CD8-positive, alpha-beta T cell (primary cell): ENCODE measurements at regions of chr19 and their contacts with region 1.

Region 1: DNA sequence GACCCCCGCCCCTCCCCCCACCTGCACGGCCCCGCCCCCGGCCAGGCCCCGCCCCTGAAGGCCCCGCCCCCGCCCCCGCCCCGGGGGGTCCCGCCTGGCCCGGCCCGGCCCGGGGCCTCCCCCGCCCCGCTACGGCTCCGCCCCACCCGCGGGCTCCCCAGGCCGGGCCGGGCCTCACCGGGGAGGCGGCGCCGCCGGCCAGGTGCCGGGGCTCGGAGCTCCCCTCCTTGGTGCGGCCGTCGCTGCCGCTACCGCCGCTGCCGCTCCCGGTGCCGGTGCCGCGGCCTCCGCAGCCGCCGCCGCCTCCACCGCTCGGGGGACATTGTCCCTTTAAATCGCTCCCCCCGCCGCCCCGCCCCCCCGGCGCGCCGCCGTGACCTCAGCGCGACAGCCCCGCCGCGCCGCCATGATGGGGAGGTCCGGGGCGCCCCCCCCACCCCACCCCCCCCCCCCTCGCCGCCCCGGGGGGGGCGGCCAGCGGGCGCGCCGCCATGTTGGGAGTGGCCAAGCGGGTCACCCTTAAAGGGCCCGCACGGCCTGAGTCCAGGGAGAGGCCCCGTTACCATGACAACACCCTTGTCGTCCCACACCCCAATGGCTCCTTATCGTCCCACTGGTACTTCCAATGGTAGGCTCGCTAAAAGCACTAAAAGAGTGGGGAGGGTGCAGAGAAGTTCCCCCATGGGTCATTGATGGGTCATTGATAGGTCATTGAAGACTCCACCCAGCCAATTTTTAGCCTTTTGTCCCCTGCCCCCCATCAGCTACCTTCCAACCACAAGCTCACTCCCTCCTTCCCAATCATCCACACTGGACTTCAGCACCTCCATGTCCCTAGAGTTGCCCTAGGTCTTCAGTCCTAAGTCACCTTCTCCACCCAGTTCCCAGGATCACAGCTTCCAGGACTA is at the start of gene WIZ:
- DNase-seq: peak; percentile 75 to 91 (median 86)
- ATAC-seq: peak; percentile 88
- H3K4me3 ChIP-seq: peak within 1 kb of the TSS; percentile 37 to 65
- H3K4me3 Mint-ChIP-seq: peak within 1 kb of the TSS; percentile 84
- H3K27ac ChIP-seq: peak within 1 kb of the TSS; percentile 40 to 83
- H3K27ac Mint-ChIP-seq: peak within 1 kb of the TSS; percentile 93
- H3K4me1 ChIP-seq: peaks cover 21% of the 10 kb centered on the region
- H3K4me1 Mint-ChIP-seq: peaks cover 33% of the 10 kb centered on the region
- H3K27me3 ChIP-seq: no peaks in the 10 kb centered on the region
- H3K27me3 Mint-ChIP-seq: no peaks in the 10 kb centered on the region
- CTCF ChIP-seq: no peak
- total RNA-seq, gene WIZ: 16.4 to 20.1 TPM

Region 2: DNA sequence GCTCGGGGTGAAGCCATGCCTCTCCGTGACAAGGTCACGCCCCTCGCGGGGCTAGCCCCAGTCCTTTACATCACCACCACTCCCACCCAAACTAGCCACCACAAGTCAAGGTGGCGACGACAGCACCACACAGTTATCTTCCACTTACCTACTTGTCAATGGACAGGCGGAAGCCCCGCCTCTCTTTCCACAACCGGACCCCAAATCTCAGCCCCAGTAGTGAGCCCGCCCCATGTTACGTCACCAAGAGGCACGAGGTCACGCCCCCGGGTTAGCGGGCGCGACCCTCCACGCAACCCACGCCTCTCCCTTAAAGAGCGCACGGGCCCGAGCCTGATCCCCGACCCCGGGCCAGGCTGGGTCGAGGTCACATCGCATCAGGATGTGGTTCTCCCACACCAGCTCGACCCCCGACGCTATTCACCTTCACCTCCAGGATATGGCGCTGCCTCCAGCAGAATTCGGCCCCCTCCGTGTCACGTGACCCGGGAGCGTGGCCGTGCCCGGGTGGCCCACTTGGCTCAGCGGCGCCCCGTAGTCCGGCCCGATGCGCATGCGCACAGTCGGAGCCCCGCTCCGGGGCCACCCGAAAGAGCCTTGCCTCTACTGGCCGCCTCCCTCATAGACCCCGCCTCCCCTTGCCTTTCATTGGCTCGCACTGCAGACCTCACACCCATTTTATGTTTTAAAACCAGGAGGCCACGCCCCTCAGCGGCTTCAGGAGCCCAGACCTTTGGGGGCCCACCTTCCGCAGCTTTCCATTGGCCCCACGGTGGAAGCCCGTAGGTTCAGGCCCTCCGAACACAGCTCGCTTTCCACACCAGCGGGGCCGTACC is 324.4 kb before region 1 on chr19:
- CTCF ChIA-PET with region 1: no interaction called
- POLR2A ChIA-PET with region 1: no interaction called
- intact Hi-C with region 1: loop called in 1 of 2 experiments (anchors 2 kb)
- DNase-seq: peak; percentile 94 to 99 (median 97)
- ATAC-seq: peak; percentile 85
- H3K4me3 ChIP-seq: peak overlapping the region; percentile 98 to 99
- H3K4me3 Mint-ChIP-seq: peak overlapping the region; percentile 99
- H3K27ac ChIP-seq: peak overlapping the region; percentile 91 to 98
- H3K27ac Mint-ChIP-seq: peak overlapping the region; percentile 98
- H3K4me1 ChIP-seq: peaks cover 34% of the 10 kb centered on the region
- H3K4me1 Mint-ChIP-seq: peaks cover 47% of the 10 kb centered on the region
- H3K27me3 ChIP-seq: no peaks in the 10 kb centered on the region
- H3K27me3 Mint-ChIP-seq: no peaks in the 10 kb centered on the region
- CTCF ChIP-seq: no peak

Region 3: GRCh38 chr19:15432629-15433518 is 17.0 kb before region 1 on chr19:
- CTCF ChIA-PET with region 1: interaction called, 3 read pairs
- POLR2A ChIA-PET with region 1: interaction called, 4 read pairs
- intact Hi-C with region 1: loop called (anchors 1 kb)
- DNase-seq: peak; percentile 85 to 96 (median 91)
- ATAC-seq: peak; percentile 95
- H3K4me3 ChIP-seq: peak overlapping the region; percentile 88 to 100
- H3K4me3 Mint-ChIP-seq: peak overlapping the region; percentile 89
- H3K27ac ChIP-seq: peak overlapping the region; percentile 76 to 79
- H3K27ac Mint-ChIP-seq: peak overlapping the region; percentile 87
- H3K4me1 ChIP-seq: peaks cover 31% of the 10 kb centered on the region
- H3K4me1 Mint-ChIP-seq: peaks cover 26% of the 10 kb centered on the region
- H3K27me3 ChIP-seq: no peaks in the 10 kb centered on the region
- H3K27me3 Mint-ChIP-seq: no peaks in the 10 kb centered on the region
- CTCF ChIP-seq: no peak

Region 4: GRCh38 chr19:15466851-15467733 is 17.2 kb after region 1 on chr19:
- CTCF ChIA-PET with region 1: interaction called, 6 read pairs
- POLR2A ChIA-PET with region 1: interaction called, 11 read pairs
- intact Hi-C with region 1: loop called in 1 of 2 experiments (anchors 1 kb)
- DNase-seq: peak in 8 of 9 experiments; percentile 32 to 75 (median 59)
- ATAC-seq: peak; percentile 25
- H3K4me3 ChIP-seq: no peak overlapping the region
- H3K4me3 Mint-ChIP-seq: peak overlapping the region; percentile 50
- H3K27ac ChIP-seq: peak overlapping the region in 1 of 2 experiments; percentile 68
- H3K27ac Mint-ChIP-seq: peak overlapping the region; percentile 89
- H3K4me1 ChIP-seq: peaks cover 58% of the 10 kb centered on the region
- H3K4me1 Mint-ChIP-seq: peaks cover 61% of the 10 kb centered on the region
- H3K27me3 ChIP-seq: no peaks in the 10 kb centered on the region
- H3K27me3 Mint-ChIP-seq: no peaks in the 10 kb centered on the region
- CTCF ChIP-seq: no peak